ENCODE measurements at regions of chr2 and their contacts with region 1.

Region 1: DNA sequence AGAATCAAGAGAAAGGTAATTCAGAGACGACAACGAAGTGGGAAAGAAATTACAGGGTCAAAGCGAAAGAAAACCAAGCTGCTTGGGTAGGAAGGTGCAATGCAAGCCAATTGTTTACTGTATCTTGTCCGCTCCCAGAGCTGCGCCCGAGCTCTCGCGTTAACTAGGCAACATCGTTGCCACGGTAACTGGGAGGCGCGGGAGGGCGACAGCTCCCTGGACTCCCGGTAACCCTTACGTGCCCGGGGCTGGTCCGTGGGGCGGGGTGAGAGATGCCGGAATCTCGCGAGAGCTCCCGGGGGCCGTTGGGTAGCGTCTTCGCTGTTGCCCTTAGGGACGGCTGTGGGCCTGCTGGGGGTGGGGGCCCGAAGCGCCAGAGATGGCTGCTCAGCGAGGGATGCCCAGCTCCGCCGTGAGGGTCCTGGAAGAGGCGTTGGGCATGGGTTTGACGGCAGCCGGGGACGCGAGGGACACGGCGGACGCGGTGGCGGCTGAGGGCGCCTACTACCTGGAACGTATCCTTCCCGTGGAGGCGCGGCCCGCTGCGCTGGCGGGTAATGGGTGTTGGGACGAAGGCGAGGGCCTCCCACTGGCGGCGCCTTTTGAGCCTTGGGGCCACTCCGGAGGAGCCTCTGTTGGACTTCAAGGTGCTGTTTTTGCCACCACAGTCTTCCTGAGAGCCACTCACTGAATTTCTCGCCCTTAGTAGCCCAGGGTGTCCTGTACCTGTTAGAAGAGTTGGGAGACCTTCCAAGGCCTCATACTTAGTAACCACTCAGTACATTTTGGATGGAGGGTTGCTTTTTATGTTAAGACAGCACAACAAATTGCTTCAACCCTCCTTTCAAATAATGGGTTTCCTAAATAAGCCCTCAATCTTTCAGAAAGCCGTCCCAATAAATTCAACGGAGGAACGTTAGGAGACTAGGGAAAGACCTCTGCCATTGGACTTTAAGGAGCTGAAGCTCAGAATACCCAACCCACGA is at the start of gene SPAG16:
- DNase-seq: peak; percentile 96
- H3K4me3 ChIP-seq: peak within 1 kb of the TSS; percentile 88 to 90 (median 89)
- H3K27ac ChIP-seq: peak within 1 kb of the TSS; percentile 84
- H3K4me1 ChIP-seq: peaks cover 11% of the 10 kb centered on the region
- H3K27me3 ChIP-seq: no peaks in the 10 kb centered on the region
- CTCF ChIP-seq: no peak
- total RNA-seq, gene SPAG16: 13.6 to 16.2 TPM

Region 2: GRCh38 chr2:213238753-213239495 is 45.5 kb before region 1 on chr2:
- CTCF ChIA-PET with region 1: no interaction called
- dilution Hi-C with region 1: no loop called
- in situ Hi-C with region 1: no loop called
- intact Hi-C with region 1: no loop called
- DNase-seq: peak; percentile 74
- H3K4me3 ChIP-seq: peak overlapping the region in 2 of 3 experiments; percentile 26 to 39
- H3K27ac ChIP-seq: peak overlapping the region; percentile 93
- H3K4me1 ChIP-seq: peaks cover 11% of the 10 kb centered on the region
- H3K27me3 ChIP-seq: no peaks in the 10 kb centered on the region
- CTCF ChIP-seq: no peak

Region 3: GRCh38 chr2:213490087-213490486 is 205.7 kb after region 1 on chr2:
- CTCF ChIA-PET with region 1: no interaction called
- dilution Hi-C with region 1: no loop called
- in situ Hi-C with region 1: no loop called
- intact Hi-C with region 1: loop called (anchors 10 kb)
- DNase-seq: no peak
- H3K4me3 ChIP-seq: no peak overlapping the region
- H3K27ac ChIP-seq: no peak overlapping the region
- H3K4me1 ChIP-seq: no peaks in the 10 kb centered on the region
- H3K27me3 ChIP-seq: no peaks in the 10 kb centered on the region
- CTCF ChIP-seq: peak in 1 of 2 donors; percentile 38

Measured in mammary epithelial cell (primary cell).